B cell (primary cell): ENCODE measurements at regions of chr7 and their contacts with region 1.

Region 1: DNA sequence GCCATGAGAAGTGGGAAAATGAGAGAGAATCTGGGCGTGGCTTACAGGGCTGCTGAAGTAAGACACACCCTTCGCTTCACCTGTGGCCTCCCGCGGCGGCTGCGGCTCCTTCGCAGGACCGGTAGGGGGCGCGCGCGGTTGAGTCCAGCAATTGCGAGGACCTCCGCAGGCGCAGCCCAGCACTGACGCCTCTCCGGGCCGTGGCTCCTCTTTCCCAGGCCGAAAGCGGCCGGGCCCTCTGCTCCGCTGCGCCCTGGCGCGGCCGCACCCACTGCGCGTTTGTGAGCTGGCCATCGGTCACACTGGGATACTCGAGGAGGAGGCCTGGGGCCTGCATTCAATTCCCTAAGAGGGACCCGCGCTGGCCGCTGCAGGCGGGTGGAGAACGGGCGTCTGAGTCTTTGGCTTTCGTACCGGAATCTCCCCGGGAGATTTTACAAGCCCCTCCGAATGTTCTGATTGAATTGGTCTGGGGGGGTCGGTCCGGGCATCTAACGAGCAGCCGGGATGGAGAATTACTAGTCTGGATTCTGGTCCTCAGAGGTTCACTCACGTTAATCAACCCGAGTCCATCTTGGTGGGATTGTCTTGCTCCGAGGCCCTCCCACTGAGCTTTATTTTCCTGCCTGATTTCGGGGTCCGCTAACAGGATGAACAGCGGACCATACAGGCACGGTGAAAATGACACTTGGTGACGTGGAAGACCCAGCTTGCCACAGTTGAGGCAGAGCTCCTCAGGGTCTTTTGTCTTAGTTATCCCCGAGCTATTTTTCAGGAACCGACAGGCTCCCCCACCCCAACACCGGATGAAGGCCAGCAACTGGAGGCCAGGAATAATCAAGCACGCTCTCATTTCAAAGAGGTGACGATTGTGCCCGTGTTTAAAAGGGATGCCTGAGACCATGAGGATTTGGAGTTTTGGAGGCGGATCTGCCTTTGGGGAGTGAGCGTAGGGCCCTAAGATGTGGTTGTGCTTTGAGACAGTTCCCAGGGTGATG is at the start of gene LRRD1:
- DNase-seq: peak; percentile 89
- ATAC-seq: peak; percentile 100
- H3K4me3 ChIP-seq: peak within 1 kb of the TSS; percentile 21 to 73 (median 56)
- H3K4me3 Mint-ChIP-seq: peak within 1 kb of the TSS; percentile 83
- H3K27ac ChIP-seq: no peak within 1 kb of the TSS
- H3K27ac Mint-ChIP-seq: peak within 1 kb of the TSS; percentile 41
- H3K4me1 ChIP-seq: peaks cover 7 to 9% of the 10 kb centered on the region in 2 donors
- H3K4me1 Mint-ChIP-seq: peaks cover 10% of the 10 kb centered on the region
- H3K27me3 ChIP-seq: no peaks in the 10 kb centered on the region
- H3K27me3 Mint-ChIP-seq: peaks cover 4% of the 10 kb centered on the region
- CTCF ChIP-seq: peak; percentile 100
- total RNA-seq, gene LRRD1: 0.15 and 0.17 TPM in 2 replicates

Region 2: DNA sequence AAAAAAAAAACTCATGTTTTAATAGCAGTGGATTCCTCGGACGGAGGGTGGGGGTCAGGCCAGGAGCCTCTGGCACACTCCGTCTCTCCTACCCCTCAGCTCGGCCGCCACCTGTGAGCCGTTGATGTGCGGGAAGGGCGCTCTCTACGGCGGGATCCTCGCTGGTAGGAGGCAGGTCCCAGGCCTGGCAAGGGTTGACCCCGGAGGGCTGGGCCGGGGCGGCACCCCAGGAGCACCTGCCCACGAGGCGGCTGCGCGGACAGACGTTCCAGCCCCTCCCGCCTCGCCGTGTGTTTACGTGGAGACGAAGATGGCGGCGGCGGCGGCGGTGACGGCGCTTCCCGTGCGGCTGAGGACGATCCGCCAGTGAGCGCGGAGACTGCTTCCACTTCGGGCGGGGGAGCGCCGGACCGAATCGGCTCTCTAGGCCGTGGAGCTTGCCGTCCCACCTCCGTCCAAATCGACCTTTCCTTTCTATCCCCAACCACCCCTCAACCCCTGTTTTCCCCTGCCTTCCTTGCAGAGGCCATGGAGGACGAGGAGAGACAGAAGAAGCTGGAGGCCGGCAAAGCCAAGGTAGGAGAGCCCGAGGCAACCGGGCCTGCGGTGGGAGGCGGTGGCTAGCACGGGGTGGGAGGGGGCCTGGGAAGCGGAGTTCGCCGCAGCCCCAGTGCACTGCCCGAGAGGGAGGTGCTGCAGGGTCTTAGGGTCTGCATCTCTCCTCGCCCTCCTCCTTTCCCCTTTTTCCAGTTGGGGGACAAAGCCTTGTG is 238.5 kb before region 1 on chr7 and contains the start of gene AKAP9:
- CTCF ChIA-PET with region 1: no interaction called
- POLR2A ChIA-PET with region 1: no interaction called
- intact Hi-C with region 1: loop called (anchors 2 kb)
- DNase-seq: peak; percentile 93
- ATAC-seq: peak; percentile 92
- H3K4me3 ChIP-seq: peak within 1 kb of the TSS; percentile 74 to 98 (median 83)
- H3K4me3 Mint-ChIP-seq: peak within 1 kb of the TSS; percentile 95
- H3K27ac ChIP-seq: peak within 1 kb of the TSS; percentile 90 to 97
- H3K27ac Mint-ChIP-seq: peak within 1 kb of the TSS; percentile 95
- H3K4me1 ChIP-seq: peaks cover 20 to 22% of the 10 kb centered on the region in 2 donors
- H3K4me1 Mint-ChIP-seq: peaks cover 31% of the 10 kb centered on the region
- H3K27me3 ChIP-seq: no peaks in the 10 kb centered on the region
- H3K27me3 Mint-ChIP-seq: no peaks in the 10 kb centered on the region
- CTCF ChIP-seq: no peak
- total RNA-seq, gene AKAP9: 101 and 106 TPM in 2 replicates

Region 3: GRCh38 chr7:92134271-92135051 is 44.8 kb before region 1 on chr7 and contains the start of gene CYP51A1:
- CTCF ChIA-PET with region 1: interaction called, 4 read pairs
- POLR2A ChIA-PET with region 1: no interaction called
- intact Hi-C with region 1: loop called (anchors 1 kb)
- DNase-seq: peak; percentile 99
- ATAC-seq: peak; percentile 84
- H3K4me3 ChIP-seq: peak within 1 kb of the TSS; percentile 86 to 94 (median 90)
- H3K4me3 Mint-ChIP-seq: peak within 1 kb of the TSS; percentile 99
- H3K27ac ChIP-seq: peak within 1 kb of the TSS; percentile 94 to 98
- H3K27ac Mint-ChIP-seq: peak within 1 kb of the TSS; percentile 100
- H3K4me1 ChIP-seq: peaks cover 18 to 27% of the 10 kb centered on the region in 2 donors
- H3K4me1 Mint-ChIP-seq: peaks cover 39% of the 10 kb centered on the region
- H3K27me3 ChIP-seq: no peaks in the 10 kb centered on the region
- H3K27me3 Mint-ChIP-seq: no peaks in the 10 kb centered on the region
- CTCF ChIP-seq: no peak
- total RNA-seq, gene CYP51A1: 36.1 and 37.9 TPM in 2 replicates

Region 4: DNA sequence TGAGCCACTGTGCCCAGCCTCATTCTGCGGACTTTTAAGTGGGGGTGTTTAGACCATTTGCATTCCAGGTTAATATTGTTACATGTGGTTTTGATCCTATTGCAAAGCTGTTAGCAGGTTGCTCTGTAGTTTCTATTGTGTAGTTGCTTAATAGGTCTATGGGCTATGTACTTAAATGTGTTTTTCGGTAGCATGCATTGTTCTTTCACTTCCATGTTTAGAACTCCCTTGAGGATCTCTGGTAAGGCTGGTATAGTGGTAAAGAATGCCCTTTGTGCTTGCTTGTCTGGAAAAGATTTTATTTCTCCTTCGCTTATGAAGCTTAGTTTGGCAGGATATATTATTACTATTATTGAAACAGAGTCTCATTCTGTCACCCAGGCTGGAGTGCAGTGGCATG is 13.1 kb after region 1 on chr7:
- CTCF ChIA-PET with region 1: interaction called, 4 read pairs
- POLR2A ChIA-PET with region 1: no interaction called
- intact Hi-C with region 1: loop called (anchors 1 kb)
- DNase-seq: no peak
- ATAC-seq: peak; percentile 28
- H3K4me3 ChIP-seq: no peak overlapping the region
- H3K4me3 Mint-ChIP-seq: no peak overlapping the region
- H3K27ac ChIP-seq: no peak overlapping the region
- H3K27ac Mint-ChIP-seq: no peak overlapping the region
- H3K4me1 ChIP-seq: no peaks in the 10 kb centered on the region
- H3K4me1 Mint-ChIP-seq: peaks cover 4% of the 10 kb centered on the region
- H3K27me3 ChIP-seq: no peaks in the 10 kb centered on the region
- H3K27me3 Mint-ChIP-seq: no peaks in the 10 kb centered on the region
- CTCF ChIP-seq: no peak

Region 5: DNA sequence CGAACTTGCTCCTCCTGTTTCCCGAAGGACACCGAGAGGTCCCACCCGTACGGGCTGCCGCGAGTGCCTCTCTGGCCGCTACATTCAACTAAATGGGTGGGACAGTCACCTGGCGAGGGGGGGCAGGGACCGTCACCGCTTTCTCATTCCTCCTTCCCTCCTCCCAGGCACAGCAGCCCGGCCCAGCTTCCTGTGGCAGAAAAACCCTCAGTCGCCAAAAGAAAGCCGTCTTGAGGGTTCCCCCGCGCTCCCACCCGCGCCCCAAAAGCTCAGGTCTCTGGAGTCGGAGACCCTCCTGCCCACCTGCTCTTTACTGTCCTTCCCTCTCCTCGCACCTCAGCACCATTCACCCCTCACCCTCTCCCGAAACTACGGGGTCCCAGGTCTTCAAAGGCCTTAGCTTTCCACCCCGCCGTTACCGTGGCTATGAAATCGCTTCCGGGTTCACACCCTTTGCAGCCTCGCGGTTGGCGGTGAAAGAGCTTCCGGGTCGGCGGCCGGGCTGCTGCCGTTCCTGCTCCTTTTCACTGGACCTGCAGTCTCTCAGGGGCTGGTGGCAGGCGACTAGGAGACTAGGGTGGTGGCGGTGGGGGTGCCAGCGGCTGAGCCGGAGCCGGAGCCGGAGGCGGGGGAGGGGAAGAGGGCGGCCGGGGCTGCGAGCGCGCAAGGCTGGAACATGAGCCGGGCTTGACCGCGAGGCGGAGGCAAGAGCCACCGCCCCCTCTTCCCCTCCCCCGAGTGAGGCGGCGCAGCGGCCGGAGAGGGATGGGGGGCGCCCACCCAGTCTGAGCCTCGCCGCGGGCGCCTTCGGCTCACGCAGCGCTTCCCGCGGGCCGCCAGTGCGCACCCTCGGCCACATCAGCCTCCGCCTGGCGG is 66.5 kb after region 1 on chr7 and contains the starts of genes ANKIB1 and KRIT1:
- CTCF ChIA-PET with region 1: interaction called, 3 read pairs
- POLR2A ChIA-PET with region 1: no interaction called
- intact Hi-C with region 1: loop called (anchors 2 kb)
- DNase-seq: peak; percentile 92
- ATAC-seq: peak; percentile 78
- H3K4me3 ChIP-seq: peak within 1 kb of the TSS; percentile 55 to 83 (median 81)
- H3K4me3 Mint-ChIP-seq: peak within 1 kb of the TSS; percentile 99
- H3K27ac ChIP-seq: peak within 1 kb of the TSS; percentile 84 to 97
- H3K27ac Mint-ChIP-seq: peak within 1 kb of the TSS; percentile 99
- H3K4me1 ChIP-seq: peaks cover 15 to 31% of the 10 kb centered on the region in 2 donors
- H3K4me1 Mint-ChIP-seq: peaks cover 39% of the 10 kb centered on the region
- H3K27me3 ChIP-seq: no peaks in the 10 kb centered on the region
- H3K27me3 Mint-ChIP-seq: no peaks in the 10 kb centered on the region
- CTCF ChIP-seq: peak; percentile 20
- total RNA-seq, gene ANKIB1: 76.7 and 77.5 TPM in 2 replicates
- total RNA-seq, gene KRIT1: 78.1 and 85.1 TPM in 2 replicates

Region 6: GRCh38 chr7:92359801-92360200 is 180.6 kb after region 1 on chr7:
- CTCF ChIA-PET with region 1: no interaction called
- POLR2A ChIA-PET with region 1: no interaction called
- intact Hi-C with region 1: no loop called
- DNase-seq: no peak
- ATAC-seq: no peak
- H3K4me3 ChIP-seq: no peak overlapping the region
- H3K4me3 Mint-ChIP-seq: no peak overlapping the region
- H3K27ac ChIP-seq: no peak overlapping the region
- H3K27ac Mint-ChIP-seq: no peak overlapping the region
- H3K4me1 ChIP-seq: no peaks in the 10 kb centered on the region
- H3K4me1 Mint-ChIP-seq: no peaks in the 10 kb centered on the region
- H3K27me3 ChIP-seq: no peaks in the 10 kb centered on the region
- H3K27me3 Mint-ChIP-seq: no peaks in the 10 kb centered on the region
- CTCF ChIP-seq: no peak

Region 7: DNA sequence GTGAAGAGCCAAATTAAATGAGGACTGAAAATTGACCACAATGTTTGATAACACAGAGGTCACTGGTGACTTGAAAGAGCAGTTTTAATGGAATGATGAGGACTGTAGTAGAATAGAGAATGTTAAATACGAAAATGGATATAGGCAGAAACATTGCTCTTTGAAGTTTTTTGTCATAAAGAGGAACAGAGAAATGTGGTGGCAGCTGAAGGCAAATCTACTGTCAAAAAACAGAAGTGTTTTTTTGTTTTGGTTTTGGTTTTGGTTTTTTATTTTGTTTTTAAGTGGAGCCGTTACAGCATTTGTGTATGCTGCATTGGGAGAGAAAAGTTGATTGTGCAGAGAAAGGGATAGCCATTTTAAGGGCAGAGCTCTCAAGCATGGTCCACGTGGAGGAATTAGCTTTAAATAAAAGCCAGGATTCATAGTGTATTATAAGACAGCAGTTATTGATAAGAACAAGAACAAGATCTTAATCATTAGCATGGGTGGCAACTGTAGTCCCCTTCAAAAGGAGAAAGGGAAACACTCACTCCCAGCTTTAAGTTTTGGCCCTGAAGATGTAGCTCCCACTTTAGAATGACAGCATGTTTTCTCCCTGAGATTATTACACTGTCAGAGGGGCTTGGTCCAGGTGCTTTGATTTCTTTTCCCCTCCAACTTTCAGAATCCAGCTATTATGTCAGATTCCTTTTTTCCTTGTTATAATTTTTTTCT is 1981.7 kb after region 1 on chr7:
- CTCF ChIA-PET with region 1: no interaction called
- POLR2A ChIA-PET with region 1: no interaction called
- intact Hi-C with region 1: loop called (anchors 10 kb)
- DNase-seq: peak; percentile 79
- ATAC-seq: peak; percentile 82
- H3K4me3 ChIP-seq: peak overlapping the region; percentile 1 to 52 (median 33)
- H3K4me3 Mint-ChIP-seq: peak overlapping the region; percentile 84
- H3K27ac ChIP-seq: peak overlapping the region; percentile 73 to 90
- H3K27ac Mint-ChIP-seq: peak overlapping the region; percentile 93
- H3K4me1 ChIP-seq: peaks cover 25 to 29% of the 10 kb centered on the region in 2 donors
- H3K4me1 Mint-ChIP-seq: peaks cover 49% of the 10 kb centered on the region
- H3K27me3 ChIP-seq: no peaks in the 10 kb centered on the region
- H3K27me3 Mint-ChIP-seq: no peaks in the 10 kb centered on the region
- CTCF ChIP-seq: no peak